ENCODE measurements at regions of chr2 and their contacts with region 1.

Region 1: DNA sequence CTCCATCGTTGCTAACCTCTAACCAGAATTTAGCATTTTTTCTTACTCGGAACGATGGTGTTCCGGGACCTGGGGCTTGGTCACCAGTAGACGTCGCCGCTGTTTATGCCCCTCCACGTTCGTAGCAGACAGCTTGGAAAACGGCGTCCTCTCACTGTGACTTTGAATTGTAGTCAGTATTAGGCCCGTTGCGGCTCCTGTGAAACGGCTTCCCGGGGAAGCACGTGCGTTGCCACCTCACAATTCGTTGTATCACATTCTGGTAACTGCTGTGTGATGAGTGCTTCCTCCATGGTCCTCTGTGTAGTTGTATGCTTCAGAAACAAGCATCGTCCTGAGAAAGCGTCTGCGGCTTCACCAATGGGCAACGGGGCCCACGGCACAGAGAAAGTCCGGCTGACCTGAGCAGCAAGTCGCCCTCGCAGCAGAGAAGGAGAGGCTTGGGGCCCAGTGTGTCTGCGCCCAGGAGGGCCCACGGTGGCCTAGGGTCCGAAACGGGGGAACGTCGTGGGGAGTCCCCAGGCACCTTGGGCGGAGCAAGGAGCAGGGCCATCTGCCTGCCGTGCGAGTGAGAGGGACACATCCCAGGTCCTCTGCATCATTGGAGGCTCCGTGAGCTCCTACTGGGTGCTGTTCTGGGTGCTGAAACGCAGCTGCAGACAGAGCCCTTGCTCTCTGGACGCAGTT is 10.4 kb downstream of the GPC1 start:
- DNase-seq: no peak
- H3K4me3 ChIP-seq: no peak overlapping the region
- H3K27ac ChIP-seq: no peak overlapping the region
- H3K4me1 ChIP-seq: no peaks in the 10 kb centered on the region
- H3K27me3 ChIP-seq: no peaks in the 10 kb centered on the region
- CTCF ChIP-seq: no peak
- POLR2A ChIP-seq: no peak

Region 2: GRCh38 chr2:239199041-239199768 is 1246.6 kb before region 1 on chr2:
- intact Hi-C with region 1: no loop called
- DNase-seq: peak in 1 of 2 donors; percentile 30
- H3K4me3 ChIP-seq: no peak overlapping the region
- H3K27ac ChIP-seq: no peak overlapping the region
- H3K4me1 ChIP-seq: no peaks in the 10 kb centered on the region
- H3K27me3 ChIP-seq: no peaks in the 10 kb centered on the region
- CTCF ChIP-seq: no peak
- POLR2A ChIP-seq: no peak

Region 3: DNA sequence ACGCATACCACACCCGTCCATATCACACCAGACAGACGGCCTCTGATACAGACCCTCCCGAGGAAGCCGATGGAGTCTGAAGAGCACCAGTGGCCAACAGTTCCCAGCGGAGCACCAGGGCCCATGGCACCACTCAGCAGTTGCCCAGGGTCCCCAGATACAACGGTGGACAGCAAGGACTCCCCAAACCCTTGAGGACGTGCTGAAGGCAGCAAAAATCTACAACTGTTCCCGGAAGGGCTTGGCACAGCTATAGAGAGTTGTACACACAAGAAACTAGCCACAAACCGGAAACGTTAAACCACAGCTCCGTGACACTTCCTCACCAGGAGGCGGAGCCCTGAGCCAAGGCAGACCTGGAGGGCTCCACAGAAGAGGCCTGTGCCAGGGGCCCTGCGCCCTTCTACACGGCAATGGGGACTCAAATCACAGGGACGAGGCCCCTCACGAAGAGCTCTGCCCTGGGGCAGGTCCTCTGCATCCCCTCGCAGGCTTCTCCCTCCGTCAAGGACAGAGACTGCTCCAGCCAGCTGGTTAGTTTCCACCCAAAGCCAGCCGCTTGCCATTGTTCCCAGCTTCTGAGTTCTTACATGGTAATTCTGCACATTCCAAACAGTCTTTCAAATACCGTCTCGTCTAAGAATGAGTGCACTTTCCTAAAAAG is 1178.4 kb before region 1 on chr2:
- intact Hi-C with region 1: no loop called
- DNase-seq: peak in 1 of 2 donors; percentile 55
- H3K4me3 ChIP-seq: peak overlapping the region in 2 of 3 donors; percentile 6 to 12
- H3K27ac ChIP-seq: peak overlapping the region; percentile 54 to 76
- H3K4me1 ChIP-seq: peaks cover 13 to 32% of the 10 kb centered on the region in 2 donors
- H3K27me3 ChIP-seq: no peaks in the 10 kb centered on the region
- CTCF ChIP-seq: peak in 1 of 3 donors; percentile 17
- POLR2A ChIP-seq: no peak

Region 4: GRCh38 chr2:239869383-239870155 is 576.3 kb before region 1 on chr2:
- intact Hi-C with region 1: no loop called
- DNase-seq: peak in 1 of 2 donors; percentile 39
- H3K4me3 ChIP-seq: no peak overlapping the region
- H3K27ac ChIP-seq: no peak overlapping the region
- H3K4me1 ChIP-seq: no peaks in the 10 kb centered on the region
- H3K27me3 ChIP-seq: peaks cover 0 to 3% of the 10 kb centered on the region in 2 donors
- CTCF ChIP-seq: no peak
- POLR2A ChIP-seq: no peak

Region 5: DNA sequence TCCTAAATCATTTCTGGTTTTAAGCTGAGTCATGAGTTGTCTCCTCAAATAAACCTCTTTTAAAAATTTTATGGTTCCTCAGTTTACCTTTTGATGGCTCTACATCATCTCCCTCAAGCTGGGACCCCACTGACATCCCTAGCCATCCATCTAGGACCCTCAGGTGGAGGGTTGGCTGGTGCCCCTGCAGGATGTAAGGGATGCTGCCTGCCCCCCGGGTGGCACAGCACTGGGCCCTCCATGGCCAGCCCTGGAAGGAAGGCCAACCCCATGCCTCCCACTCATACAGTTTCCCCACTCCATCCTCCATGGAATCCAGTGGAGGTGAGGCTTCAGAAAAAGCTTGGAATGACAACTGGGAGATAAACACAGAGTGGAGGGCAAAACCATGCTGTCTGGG is 27.5 kb before region 1 on chr2:
- intact Hi-C with region 1: loop called (anchors 1 kb)
- DNase-seq: no peak
- H3K4me3 ChIP-seq: no peak overlapping the region
- H3K27ac ChIP-seq: no peak overlapping the region
- H3K4me1 ChIP-seq: no peaks in the 10 kb centered on the region
- H3K27me3 ChIP-seq: no peaks in the 10 kb centered on the region
- CTCF ChIP-seq: no peak
- POLR2A ChIP-seq: no peak